ENCODE measurements at regions of chr3 and their contacts with region 1.

Region 1: DNA sequence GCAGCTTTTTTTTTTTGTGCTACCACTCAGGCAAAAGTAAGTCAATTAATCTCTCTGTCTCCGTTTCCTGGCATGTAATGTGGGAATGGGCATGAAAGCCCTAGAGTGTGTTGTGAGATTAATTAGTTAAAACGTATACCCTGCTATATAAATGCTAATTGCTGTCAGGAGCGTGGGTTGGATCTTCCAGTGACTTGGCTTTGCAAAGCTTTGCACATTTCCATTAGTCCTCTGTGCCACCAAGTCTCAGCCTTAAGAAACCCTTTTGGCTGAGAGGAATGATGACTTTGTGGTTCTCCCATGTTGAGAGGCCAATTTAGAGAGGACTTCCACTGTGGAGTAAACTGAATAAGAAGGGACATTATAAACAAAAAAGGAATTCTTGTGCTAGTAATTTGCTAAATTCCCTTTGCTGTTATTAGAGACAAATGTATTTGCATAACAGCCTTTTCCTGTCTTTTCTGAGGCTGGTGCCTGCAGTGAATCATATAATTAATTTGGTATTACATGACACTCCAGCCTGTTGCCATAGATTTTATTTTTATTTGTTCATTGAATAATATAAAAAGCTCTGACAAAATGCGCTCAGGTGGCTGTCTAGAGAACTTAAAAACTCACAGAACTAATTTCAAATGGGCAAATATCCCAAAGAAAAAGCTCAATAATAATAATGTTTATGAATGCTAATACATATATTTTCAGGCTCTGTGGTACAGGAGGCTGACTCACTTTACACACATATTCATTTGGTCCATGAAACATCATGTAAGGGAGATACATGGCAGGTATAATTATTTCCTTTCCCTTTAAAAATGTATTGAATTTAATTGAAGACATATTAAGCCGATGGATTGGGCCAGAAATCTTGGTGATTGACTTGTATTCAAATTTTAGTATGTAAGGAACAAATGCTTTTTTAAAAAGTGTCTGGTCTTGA is 82.7 kb downstream of the IL1RAP start:
- DNase-seq: no peak

Region 2: GRCh38 chr3:190581041-190581541 is 15.5 kb before region 1 on chr3:
- intact Hi-C with region 1: loop called (anchors 2 kb)
- DNase-seq: no peak

Region 3: GRCh38 chr3:190644035-190644434 is 47.4 kb after region 1 on chr3:
- intact Hi-C with region 1: no loop called
- DNase-seq: no peak

Region 4: GRCh38 chr3:191085091-191085490 is 488.5 kb after region 1 on chr3:
- intact Hi-C with region 1: no loop called
- DNase-seq: no peak